ENCODE measurements at regions of chr3 and their contacts with region 1.

Region 1: DNA sequence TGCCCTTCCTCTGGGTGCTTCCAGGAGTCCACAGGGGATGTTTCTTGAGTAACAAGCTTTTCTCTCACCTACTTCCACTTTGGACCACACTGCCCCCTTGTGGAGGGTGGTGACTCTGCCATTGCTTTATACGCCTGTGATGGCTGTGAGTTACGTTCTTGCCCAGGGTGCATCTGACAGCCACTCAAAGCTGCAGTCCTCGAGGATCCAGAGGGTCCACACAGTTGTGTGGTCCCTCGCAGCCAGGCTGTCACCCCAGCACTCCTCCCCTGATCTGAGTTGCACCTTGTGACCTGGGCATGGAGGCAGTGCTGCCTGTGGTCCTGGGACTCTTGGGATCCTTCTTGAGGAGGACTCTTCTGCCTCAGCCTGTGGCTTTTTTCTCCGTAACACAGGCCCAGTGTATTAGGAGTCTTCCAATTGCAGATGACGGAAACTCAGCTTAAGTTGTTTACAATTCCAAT is 23.4 kb downstream of the FOXL2 start:
- DNase-seq: peak; percentile 65 to 86 (median 77)
- ATAC-seq: peak; percentile 96
- H3K4me3 ChIP-seq: no peak overlapping the region
- H3K4me3 Mint-ChIP-seq: no peak overlapping the region
- H3K27ac ChIP-seq: no peak overlapping the region
- H3K27ac Mint-ChIP-seq: peak overlapping the region in 1 of 9 donors; percentile 35
- H3K4me1 ChIP-seq: no peaks in the 10 kb centered on the region
- H3K4me1 Mint-ChIP-seq: peaks cover 0 to 5% (median 0%) of the 10 kb centered on the region in 7 donors
- H3K27me3 ChIP-seq: no peaks in the 10 kb centered on the region
- H3K27me3 Mint-ChIP-seq: peaks cover 0 to 13% (median 4%) of the 10 kb centered on the region in 5 donors

Region 2: GRCh38 chr3:138068579-138069174 is 854.9 kb before region 1 on chr3:
- CTCF ChIA-PET with region 1: interaction called, 3 read pairs
- POLR2A ChIA-PET with region 1: no interaction called
- intact Hi-C with region 1: loop called (anchors 1 to 5 kb)
- DNase-seq: peak; percentile 36 to 78 (median 55)
- ATAC-seq: peak; percentile 85
- H3K4me3 ChIP-seq: no peak overlapping the region
- H3K4me3 Mint-ChIP-seq: no peak overlapping the region
- H3K27ac ChIP-seq: no peak overlapping the region
- H3K27ac Mint-ChIP-seq: no peak overlapping the region
- H3K4me1 ChIP-seq: no peaks in the 10 kb centered on the region
- H3K4me1 Mint-ChIP-seq: peaks cover 0 to 8% (median 0%) of the 10 kb centered on the region in 7 donors
- H3K27me3 ChIP-seq: no peaks in the 10 kb centered on the region
- H3K27me3 Mint-ChIP-seq: peaks cover 6 to 15% (median 12%) of the 10 kb centered on the region in 5 donors

Region 3: GRCh38 chr3:138180375-138181029 is 743.1 kb before region 1 on chr3:
- CTCF ChIA-PET with region 1: no interaction called
- POLR2A ChIA-PET with region 1: no interaction called
- intact Hi-C with region 1: loop called (anchors 2 to 5 kb)
- DNase-seq: peak in 7 of 9 donors; percentile 16 to 53 (median 38)
- ATAC-seq: peak; percentile 95
- H3K4me3 ChIP-seq: no peak overlapping the region
- H3K4me3 Mint-ChIP-seq: no peak overlapping the region
- H3K27ac ChIP-seq: no peak overlapping the region
- H3K27ac Mint-ChIP-seq: no peak overlapping the region
- H3K4me1 ChIP-seq: no peaks in the 10 kb centered on the region
- H3K4me1 Mint-ChIP-seq: peaks cover 0 to 13% (median 5%) of the 10 kb centered on the region in 7 donors
- H3K27me3 ChIP-seq: no peaks in the 10 kb centered on the region
- H3K27me3 Mint-ChIP-seq: peaks cover 0 to 32% (median 9%) of the 10 kb centered on the region in 5 donors

Region 4: GRCh38 chr3:138417559-138417982 is 506.0 kb before region 1 on chr3:
- CTCF ChIA-PET with region 1: interaction called, 21 read pairs
- POLR2A ChIA-PET with region 1: interaction called, 4 read pairs
- intact Hi-C with region 1: loop called (anchors 1 kb)
- DNase-seq: peak; percentile 8 to 60 (median 47)
- ATAC-seq: peak; percentile 74
- H3K4me3 ChIP-seq: no peak overlapping the region
- H3K4me3 Mint-ChIP-seq: no peak overlapping the region
- H3K27ac ChIP-seq: no peak overlapping the region
- H3K27ac Mint-ChIP-seq: no peak overlapping the region
- H3K4me1 ChIP-seq: no peaks in the 10 kb centered on the region
- H3K4me1 Mint-ChIP-seq: peaks cover 0 to 7% (median 0%) of the 10 kb centered on the region in 7 donors
- H3K27me3 ChIP-seq: no peaks in the 10 kb centered on the region
- H3K27me3 Mint-ChIP-seq: peaks cover 12 to 28% (median 19%) of the 10 kb centered on the region in 5 donors

Region 5: GRCh38 chr3:138479438-138479863 is 444.1 kb before region 1 on chr3:
- CTCF ChIA-PET with region 1: no interaction called
- POLR2A ChIA-PET with region 1: no interaction called
- intact Hi-C with region 1: loop called in 1 of 2 experiments (anchors 1 kb)
- DNase-seq: peak in 1 of 9 donors; percentile 8
- ATAC-seq: no peak
- H3K4me3 ChIP-seq: no peak overlapping the region
- H3K4me3 Mint-ChIP-seq: no peak overlapping the region
- H3K27ac ChIP-seq: no peak overlapping the region
- H3K27ac Mint-ChIP-seq: no peak overlapping the region
- H3K4me1 ChIP-seq: no peaks in the 10 kb centered on the region
- H3K4me1 Mint-ChIP-seq: peaks cover 0 to 2% (median 0%) of the 10 kb centered on the region in 7 donors
- H3K27me3 ChIP-seq: no peaks in the 10 kb centered on the region
- H3K27me3 Mint-ChIP-seq: peaks cover 0 to 11% (median 0%) of the 10 kb centered on the region in 5 donors

Region 6: GRCh38 chr3:138694287-138695007 is 229.1 kb before region 1 on chr3:
- CTCF ChIA-PET with region 1: interaction called, 13 read pairs
- POLR2A ChIA-PET with region 1: no interaction called
- intact Hi-C with region 1: loop called in 1 of 2 experiments (anchors 1 kb)
- DNase-seq: no peak
- ATAC-seq: no peak
- H3K4me3 ChIP-seq: no peak overlapping the region
- H3K4me3 Mint-ChIP-seq: no peak overlapping the region
- H3K27ac ChIP-seq: no peak overlapping the region
- H3K27ac Mint-ChIP-seq: no peak overlapping the region
- H3K4me1 ChIP-seq: no peaks in the 10 kb centered on the region
- H3K4me1 Mint-ChIP-seq: peaks cover 0 to 4% (median 0%) of the 10 kb centered on the region in 7 donors
- H3K27me3 ChIP-seq: no peaks in the 10 kb centered on the region
- H3K27me3 Mint-ChIP-seq: no peaks in the 10 kb centered on the region

Region 7: DNA sequence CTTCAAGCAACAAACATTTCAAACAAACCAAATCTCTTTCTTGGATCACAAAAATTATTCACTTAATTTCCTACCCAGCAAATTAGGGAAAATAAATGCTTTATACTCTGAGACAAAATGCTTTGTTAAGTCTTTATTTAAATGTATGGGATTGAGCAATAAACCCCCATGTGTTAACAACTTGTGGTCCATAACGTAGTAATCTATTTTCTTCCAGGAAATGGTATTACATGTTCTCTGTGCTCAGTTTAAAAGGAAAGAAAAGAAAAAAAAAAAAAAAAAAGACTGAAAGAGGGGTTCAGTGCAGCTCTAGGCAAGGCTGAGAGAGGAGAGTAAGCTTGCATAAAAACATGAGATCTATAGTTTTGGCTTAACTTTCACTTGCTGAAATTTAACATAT is 191.1 kb before region 1 on chr3:
- CTCF ChIA-PET with region 1: no interaction called
- POLR2A ChIA-PET with region 1: no interaction called
- intact Hi-C with region 1: no loop called
- DNase-seq: no peak
- ATAC-seq: no peak
- H3K4me3 ChIP-seq: no peak overlapping the region
- H3K4me3 Mint-ChIP-seq: no peak overlapping the region
- H3K27ac ChIP-seq: no peak overlapping the region
- H3K27ac Mint-ChIP-seq: peak overlapping the region in 2 of 9 donors; percentile 14 to 64
- H3K4me1 ChIP-seq: no peaks in the 10 kb centered on the region
- H3K4me1 Mint-ChIP-seq: peaks cover 0 to 8% (median 5%) of the 10 kb centered on the region in 7 donors
- H3K27me3 ChIP-seq: no peaks in the 10 kb centered on the region
- H3K27me3 Mint-ChIP-seq: no peaks in the 10 kb centered on the region

Region 8: GRCh38 chr3:138935848-138936740 is 12.5 kb after region 1 on chr3:
- CTCF ChIA-PET with region 1: interaction called, 38 read pairs
- POLR2A ChIA-PET with region 1: no interaction called
- intact Hi-C with region 1: no loop called
- DNase-seq: peak; percentile 30 to 81 (median 67)
- ATAC-seq: peak; percentile 90
- H3K4me3 ChIP-seq: peak overlapping the region; percentile 55
- H3K4me3 Mint-ChIP-seq: peak overlapping the region; percentile 60 to 86 (median 76)
- H3K27ac ChIP-seq: no peak overlapping the region
- H3K27ac Mint-ChIP-seq: peak overlapping the region in 1 of 9 donors; percentile 29
- H3K4me1 ChIP-seq: peaks cover 21 to 31% of the 10 kb centered on the region in 2 donors
- H3K4me1 Mint-ChIP-seq: peaks cover 19 to 43% (median 31%) of the 10 kb centered on the region in 7 donors
- H3K27me3 ChIP-seq: peaks cover 14 to 50% of the 10 kb centered on the region in 2 donors
- H3K27me3 Mint-ChIP-seq: peaks cover 55 to 84% (median 77%) of the 10 kb centered on the region in 5 donors

Measured in naive thymus-derived CD4-positive, alpha-beta T cell (primary cell).